ENCODE measurements at regions of chr19 and their contacts with region 1.

Region 1: GRCh38 chr19:17282488-17283255 is 971 bp downstream of the ANKLE1 start:
- DNase-seq: peak; percentile 92
- ATAC-seq: peak; percentile 98
- H3K4me3 ChIP-seq: peak overlapping the region; percentile 31
- H3K27ac ChIP-seq: no peak overlapping the region
- H3K4me1 ChIP-seq: peaks cover 16% of the 10 kb centered on the region
- H3K27me3 ChIP-seq: peaks cover 18% of the 10 kb centered on the region
- CTCF ChIP-seq: peak; percentile 95

Region 2: DNA sequence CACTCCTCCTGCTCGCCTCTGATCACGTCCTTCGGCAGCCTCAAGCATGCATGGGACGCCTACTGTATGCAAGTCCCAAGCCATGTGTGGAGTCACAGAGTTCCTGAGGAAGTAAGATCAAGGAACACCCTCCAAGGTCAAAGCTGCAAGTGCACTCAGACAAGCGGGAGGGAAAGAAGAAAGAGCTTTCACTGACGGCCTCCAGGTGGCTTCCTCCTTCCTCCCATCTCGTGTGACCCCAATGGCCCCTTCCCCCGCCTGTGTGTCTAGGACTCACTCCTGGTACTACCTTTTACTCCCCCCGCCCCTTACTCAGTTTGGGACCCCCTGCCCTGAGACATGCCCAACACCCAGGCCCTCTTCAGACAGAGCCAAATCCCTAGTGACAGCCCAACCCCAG is 213.5 kb before region 1 on chr19:
- intact Hi-C with region 1: loop called (anchors 5 kb)
- DNase-seq: no peak
- ATAC-seq: no peak
- H3K4me3 ChIP-seq: no peak overlapping the region
- H3K27ac ChIP-seq: no peak overlapping the region
- H3K4me1 ChIP-seq: peaks cover 7% of the 10 kb centered on the region
- H3K27me3 ChIP-seq: no peaks in the 10 kb centered on the region
- CTCF ChIP-seq: no peak

Region 3: GRCh38 chr19:17205237-17206140 is 77.2 kb before region 1 on chr19:
- intact Hi-C with region 1: loop called (anchors 2 kb)
- DNase-seq: peak; percentile 86
- ATAC-seq: peak; percentile 84
- H3K4me3 ChIP-seq: no peak overlapping the region
- H3K27ac ChIP-seq: no peak overlapping the region
- H3K4me1 ChIP-seq: no peaks in the 10 kb centered on the region
- H3K27me3 ChIP-seq: no peaks in the 10 kb centered on the region
- CTCF ChIP-seq: peak; percentile 63

Region 4: GRCh38 chr19:17333739-17334413 is 51.2 kb after region 1 on chr19:
- intact Hi-C with region 1: no loop called
- DNase-seq: no peak
- ATAC-seq: peak; percentile 0
- H3K4me3 ChIP-seq: peak overlapping the region; percentile 78
- H3K27ac ChIP-seq: peak overlapping the region; percentile 68
- H3K4me1 ChIP-seq: peaks cover 30% of the 10 kb centered on the region
- H3K27me3 ChIP-seq: no peaks in the 10 kb centered on the region
- CTCF ChIP-seq: no peak

Measured in upper lobe of right lung (tissue), 1 donor.